Adrenal gland (tissue), 19 donors: ENCODE measurements at regions of chr10 and their contacts with region 1.

Region 1: GRCh38 chr10:96826438-96826837 is 5.7 kb upstream of the LCOR start:
- DNase-seq: no peak
- H3K4me3 ChIP-seq: no peak overlapping the region
- H3K27ac ChIP-seq: no peak overlapping the region
- H3K4me1 ChIP-seq: peaks cover 0 to 4% of the 10 kb centered on the region in 2 donors
- H3K27me3 ChIP-seq: no peaks in the 10 kb centered on the region
- CTCF ChIP-seq: no peak
- POLR2A ChIP-seq: no peak

Region 2: DNA sequence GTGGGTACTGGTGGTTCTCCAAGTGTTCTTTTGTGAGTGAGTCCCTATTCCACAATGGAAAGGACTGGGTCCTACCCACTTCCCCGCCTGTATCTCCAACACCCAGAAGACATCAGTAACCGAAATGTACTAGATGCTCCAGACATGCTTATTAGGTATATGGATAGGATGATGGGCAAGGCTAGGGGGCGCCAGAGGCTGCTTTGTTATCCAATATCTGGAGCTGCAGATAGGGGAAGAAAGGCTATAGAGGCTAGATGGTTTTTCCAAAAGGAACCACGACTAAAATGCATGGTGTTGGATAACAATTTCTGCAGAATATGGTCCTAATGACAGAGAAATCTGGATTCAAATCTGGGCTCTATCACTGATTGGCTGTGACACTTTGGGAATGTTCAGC is 183.5 kb before region 1 on chr10:
- intact Hi-C with region 1: loop called in 1 of 2 experiments (anchors 10 kb)
- DNase-seq: peak; percentile 48 to 89 (median 56)
- H3K4me3 ChIP-seq: no peak overlapping the region
- H3K27ac ChIP-seq: no peak overlapping the region
- H3K4me1 ChIP-seq: no peaks in the 10 kb centered on the region
- H3K27me3 ChIP-seq: no peaks in the 10 kb centered on the region
- CTCF ChIP-seq: peak; percentile 17 to 53 (median 46)
- POLR2A ChIP-seq: no peak

Region 3: DNA sequence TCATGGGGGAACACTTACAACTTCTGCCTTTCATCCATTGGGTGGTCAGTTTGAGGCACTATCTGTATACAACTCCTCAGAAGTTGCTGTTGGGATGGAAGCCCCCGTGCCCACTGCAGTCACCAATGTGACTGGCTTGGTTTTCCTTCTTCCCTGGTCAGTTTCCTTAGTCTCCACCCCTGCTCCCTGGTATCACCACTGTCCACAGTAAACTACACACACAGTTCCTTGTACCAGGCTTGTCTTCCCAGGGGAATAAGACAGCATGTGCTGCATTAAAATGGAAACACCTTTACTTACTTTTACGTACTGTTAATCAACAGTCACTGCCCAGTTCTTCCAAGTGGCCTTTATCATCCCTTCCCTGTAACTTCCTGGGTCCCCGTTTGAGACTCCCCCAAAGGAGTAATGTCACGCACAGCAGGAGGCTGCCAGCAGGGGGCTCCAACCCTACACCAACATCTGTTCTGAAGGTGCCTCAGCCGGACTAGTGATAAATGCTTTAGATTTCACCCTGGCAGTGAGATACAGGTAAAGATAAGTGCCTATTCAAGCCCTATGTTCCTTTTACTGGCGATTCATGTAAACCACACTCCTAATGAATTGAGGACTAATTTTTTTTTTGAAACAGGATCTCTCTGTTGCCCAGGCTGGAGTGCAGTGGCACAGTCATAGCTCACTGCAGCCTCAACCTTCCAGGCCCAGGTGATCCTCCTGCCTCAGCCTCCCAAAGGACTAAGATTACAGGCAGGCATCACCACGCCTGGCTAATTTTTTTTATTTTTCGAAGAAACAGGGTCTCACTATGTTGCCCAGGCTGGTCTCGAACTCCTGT is 60.8 kb before region 1 on chr10:
- intact Hi-C with region 1: loop called in 1 of 2 experiments (anchors 5 kb)
- DNase-seq: peak; percentile 58 to 83 (median 73)
- H3K4me3 ChIP-seq: no peak overlapping the region
- H3K27ac ChIP-seq: no peak overlapping the region
- H3K4me1 ChIP-seq: no peaks in the 10 kb centered on the region
- H3K27me3 ChIP-seq: no peaks in the 10 kb centered on the region
- CTCF ChIP-seq: peak; percentile 64 to 81 (median 76)
- POLR2A ChIP-seq: no peak

Region 4: GRCh38 chr10:97037365-97038361 is 211.2 kb after region 1 on chr10:
- intact Hi-C with region 1: loop called in 1 of 2 experiments (anchors 10 kb)
- DNase-seq: peak; percentile 80 to 93 (median 85)
- H3K4me3 ChIP-seq: peak overlapping the region in 2 of 4 donors; percentile 15 to 49
- H3K27ac ChIP-seq: no peak overlapping the region
- H3K4me1 ChIP-seq: peaks cover 0 to 8% of the 10 kb centered on the region in 2 donors
- H3K27me3 ChIP-seq: no peaks in the 10 kb centered on the region
- CTCF ChIP-seq: peak; percentile 82 to 91 (median 85)
- POLR2A ChIP-seq: no peak